Ascending aorta (tissue), 2 donors: ENCODE measurements at regions of chr6 and their contacts with region 1.

Region 1: DNA sequence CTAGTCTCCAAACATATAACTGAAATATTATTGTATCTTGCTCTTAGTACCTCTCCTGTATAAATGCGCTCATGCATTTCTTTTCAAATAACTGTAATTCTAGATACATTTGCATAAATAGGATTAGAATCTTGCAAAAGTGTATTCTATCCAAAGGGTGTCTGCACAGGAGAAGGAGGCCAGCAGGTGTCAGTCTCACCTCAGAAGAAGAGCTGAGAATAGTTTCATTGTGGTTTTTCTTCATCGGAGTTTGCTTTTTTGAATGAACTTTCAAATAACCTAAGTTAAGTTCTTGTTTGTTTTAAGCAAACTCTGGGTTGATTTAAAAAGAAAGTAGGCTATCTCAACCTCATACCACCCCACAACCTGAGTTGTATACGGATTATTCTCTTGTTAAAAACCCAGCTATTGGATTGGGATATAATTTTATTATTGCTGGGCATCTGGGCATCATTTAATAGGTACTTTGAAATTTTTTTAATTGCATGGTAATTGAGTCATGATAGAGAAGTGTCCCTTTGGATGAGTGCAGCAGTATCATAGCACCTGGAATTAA is 125.0 kb upstream of the MLIP start:
- DNase-seq: no peak
- H3K4me3 ChIP-seq: no peak overlapping the region
- H3K27ac ChIP-seq: no peak overlapping the region
- H3K4me1 ChIP-seq: no peaks in the 10 kb centered on the region
- H3K27me3 ChIP-seq: no peaks in the 10 kb centered on the region
- CTCF ChIP-seq: peak in 2 of 3 experiments; percentile 62 to 74

Region 2: GRCh38 chr6:54031169-54031568 is 44.9 kb after region 1 on chr6:
- intact Hi-C with region 1: no loop called
- DNase-seq: no peak
- H3K4me3 ChIP-seq: no peak overlapping the region
- H3K27ac ChIP-seq: no peak overlapping the region
- H3K4me1 ChIP-seq: no peaks in the 10 kb centered on the region
- H3K27me3 ChIP-seq: no peaks in the 10 kb centered on the region
- CTCF ChIP-seq: no peak

Region 3: GRCh38 chr6:54267798-54268197 is 281.6 kb after region 1 on chr6:
- intact Hi-C with region 1: loop called (anchors 10 kb)
- DNase-seq: no peak
- H3K4me3 ChIP-seq: no peak overlapping the region
- H3K27ac ChIP-seq: no peak overlapping the region
- H3K4me1 ChIP-seq: no peaks in the 10 kb centered on the region
- H3K27me3 ChIP-seq: no peaks in the 10 kb centered on the region
- CTCF ChIP-seq: no peak

Region 4: DNA sequence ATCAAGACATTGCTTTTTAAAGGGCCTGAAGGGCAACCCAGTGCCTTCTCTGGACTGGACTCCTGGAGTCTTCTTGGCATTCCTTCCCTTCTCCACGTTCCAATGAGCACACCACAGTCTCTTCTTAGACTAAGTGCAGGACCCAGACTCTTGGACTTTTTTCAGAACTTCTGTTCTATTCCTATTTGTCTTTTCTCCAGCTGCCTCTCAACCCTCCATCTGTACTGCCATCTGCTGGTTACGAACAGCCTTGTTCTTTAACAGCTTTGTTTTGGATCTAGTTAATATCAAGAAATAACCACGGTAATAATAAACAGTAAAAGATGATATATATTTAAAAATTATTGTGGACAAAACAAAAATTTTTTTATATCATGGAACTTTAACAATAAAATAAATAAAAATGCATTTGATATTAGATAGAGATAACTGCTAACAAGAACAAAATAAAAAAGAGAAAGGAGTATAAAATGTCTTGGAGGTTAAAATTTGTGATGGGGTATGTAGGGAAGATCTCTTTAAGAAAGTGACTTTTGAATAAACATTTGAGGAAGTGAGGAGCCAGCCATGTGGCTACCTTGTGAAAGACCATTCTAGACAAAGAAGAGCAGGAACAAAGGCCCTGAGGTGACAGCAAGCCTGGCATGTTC is 1083.0 kb after region 1 on chr6:
- intact Hi-C with region 1: loop called (anchors 5 kb)
- DNase-seq: no peak
- H3K4me3 ChIP-seq: no peak overlapping the region
- H3K27ac ChIP-seq: no peak overlapping the region
- H3K4me1 ChIP-seq: no peaks in the 10 kb centered on the region
- H3K27me3 ChIP-seq: no peaks in the 10 kb centered on the region
- CTCF ChIP-seq: peak; percentile 22 to 35 (median 24)

Region 5: DNA sequence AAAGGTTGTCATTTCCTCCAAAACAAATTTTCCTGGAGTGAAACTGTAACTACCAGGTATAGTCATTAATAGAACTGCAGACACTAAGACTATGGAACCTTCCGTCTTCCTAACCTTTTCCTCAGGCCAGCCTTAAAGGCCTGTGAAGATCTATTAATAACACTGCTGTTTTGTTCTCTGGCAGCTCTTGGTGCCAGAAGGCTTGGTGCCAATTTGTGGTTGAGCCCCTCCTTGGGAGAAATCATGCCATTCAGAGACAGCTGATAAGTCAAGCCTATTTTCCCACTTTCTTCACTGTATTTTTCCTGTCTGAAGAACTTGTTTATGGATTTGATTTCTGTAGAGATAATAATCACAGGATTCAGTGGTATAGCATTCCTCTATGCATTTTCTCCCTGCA is 1252.9 kb after region 1 on chr6:
- intact Hi-C with region 1: loop called (anchors 5 kb)
- DNase-seq: no peak
- H3K4me3 ChIP-seq: no peak overlapping the region
- H3K27ac ChIP-seq: no peak overlapping the region
- H3K4me1 ChIP-seq: no peaks in the 10 kb centered on the region
- H3K27me3 ChIP-seq: no peaks in the 10 kb centered on the region
- CTCF ChIP-seq: no peak